GM12878 (cell line): ENCODE measurements at regions of chr9 and their contacts with region 1.

Region 1: GRCh38 chr9:133030317-133031129 is at the start of gene GTF3C5:
- DNase-seq: peak; percentile 97
- ATAC-seq: peak; percentile 99
- H3K4me3 ChIP-seq: peak within 1 kb of the TSS; percentile 77
- H3K27ac ChIP-seq: peak within 1 kb of the TSS; percentile 91
- H3K4me1 ChIP-seq: peaks cover 13% of the 10 kb centered on the region
- H3K27me3 ChIP-seq: no peaks in the 10 kb centered on the region
- CTCF ChIP-seq: no peak
- EP300 ChIP-seq: peak in 1 of 2 experiments; percentile 35; a peak in 1 of 4 replicates
- POLR2A ChIP-seq: peak; percentile 95
- RAD21 ChIP-seq: no peak
- polyA plus RNA-seq, gene GTF3C5: 2.2 to 6.9 TPM

Region 2: DNA sequence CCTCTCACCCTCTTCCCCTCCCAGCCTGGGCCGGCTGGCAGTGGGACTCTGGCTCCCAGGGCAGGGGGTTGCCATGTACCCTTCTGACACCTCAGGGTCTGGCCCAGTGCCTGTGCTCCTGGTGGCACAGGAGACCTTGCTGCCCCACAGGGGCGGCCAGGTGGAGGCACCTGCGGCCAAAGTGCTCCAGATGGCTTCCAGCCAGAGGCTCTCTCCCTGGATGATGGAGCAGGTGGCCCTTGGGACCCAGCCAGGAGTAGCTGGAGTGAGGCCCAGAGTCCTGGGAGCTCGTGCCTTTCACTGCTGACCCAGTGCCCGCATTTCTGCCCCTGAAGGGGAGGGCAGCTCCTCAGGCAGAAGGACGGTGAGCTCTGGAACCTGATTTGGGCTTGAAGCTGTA is 781.4 kb before region 1 on chr9:
- CTCF ChIA-PET with region 1: no interaction called
- POLR2A ChIA-PET with region 1: no interaction called
- RAD21 ChIA-PET with region 1: no interaction called
- SMC1A ChIA-PET with region 1: no interaction called
- in situ Hi-C with region 1: no loop called
- intact Hi-C with region 1: no loop called
- DNase-seq: no peak
- ATAC-seq: no peak
- H3K4me3 ChIP-seq: no peak overlapping the region
- H3K27ac ChIP-seq: no peak overlapping the region
- H3K4me1 ChIP-seq: no peaks in the 10 kb centered on the region
- H3K27me3 ChIP-seq: no peaks in the 10 kb centered on the region; a peak in 1 of 4 replicates
- CTCF ChIP-seq: no peak
- EP300 ChIP-seq: no peak
- POLR2A ChIP-seq: no peak
- RAD21 ChIP-seq: no peak

Region 3: GRCh38 chr9:133014696-133015095 is 15.8 kb before region 1 on chr9:
- CTCF ChIA-PET with region 1: no interaction called
- POLR2A ChIA-PET with region 1: no interaction called
- RAD21 ChIA-PET with region 1: no interaction called
- SMC1A ChIA-PET with region 1: no interaction called
- in situ Hi-C with region 1: no loop called
- intact Hi-C with region 1: no loop called
- DNase-seq: no peak
- ATAC-seq: no peak
- H3K4me3 ChIP-seq: no peak overlapping the region
- H3K27ac ChIP-seq: no peak overlapping the region
- H3K4me1 ChIP-seq: no peaks in the 10 kb centered on the region
- H3K27me3 ChIP-seq: no peaks in the 10 kb centered on the region; a peak in 1 of 4 replicates
- CTCF ChIP-seq: no peak
- EP300 ChIP-seq: no peak
- POLR2A ChIP-seq: no peak
- RAD21 ChIP-seq: no peak

Region 4: GRCh38 chr9:133042676-133043075 is 12.2 kb after region 1 on chr9:
- CTCF ChIA-PET with region 1: interaction called, 20 read pairs
- POLR2A ChIA-PET with region 1: no interaction called
- RAD21 ChIA-PET with region 1: interaction called, 4 read pairs
- SMC1A ChIA-PET with region 1: interaction called, 4 read pairs
- in situ Hi-C with region 1: no loop called
- intact Hi-C with region 1: no loop called
- DNase-seq: no peak
- ATAC-seq: no peak
- H3K4me3 ChIP-seq: no peak overlapping the region
- H3K27ac ChIP-seq: no peak overlapping the region
- H3K4me1 ChIP-seq: no peaks in the 10 kb centered on the region
- H3K27me3 ChIP-seq: no peaks in the 10 kb centered on the region
- CTCF ChIP-seq: no peak
- EP300 ChIP-seq: no peak
- POLR2A ChIP-seq: no peak
- RAD21 ChIP-seq: no peak

Region 5: DNA sequence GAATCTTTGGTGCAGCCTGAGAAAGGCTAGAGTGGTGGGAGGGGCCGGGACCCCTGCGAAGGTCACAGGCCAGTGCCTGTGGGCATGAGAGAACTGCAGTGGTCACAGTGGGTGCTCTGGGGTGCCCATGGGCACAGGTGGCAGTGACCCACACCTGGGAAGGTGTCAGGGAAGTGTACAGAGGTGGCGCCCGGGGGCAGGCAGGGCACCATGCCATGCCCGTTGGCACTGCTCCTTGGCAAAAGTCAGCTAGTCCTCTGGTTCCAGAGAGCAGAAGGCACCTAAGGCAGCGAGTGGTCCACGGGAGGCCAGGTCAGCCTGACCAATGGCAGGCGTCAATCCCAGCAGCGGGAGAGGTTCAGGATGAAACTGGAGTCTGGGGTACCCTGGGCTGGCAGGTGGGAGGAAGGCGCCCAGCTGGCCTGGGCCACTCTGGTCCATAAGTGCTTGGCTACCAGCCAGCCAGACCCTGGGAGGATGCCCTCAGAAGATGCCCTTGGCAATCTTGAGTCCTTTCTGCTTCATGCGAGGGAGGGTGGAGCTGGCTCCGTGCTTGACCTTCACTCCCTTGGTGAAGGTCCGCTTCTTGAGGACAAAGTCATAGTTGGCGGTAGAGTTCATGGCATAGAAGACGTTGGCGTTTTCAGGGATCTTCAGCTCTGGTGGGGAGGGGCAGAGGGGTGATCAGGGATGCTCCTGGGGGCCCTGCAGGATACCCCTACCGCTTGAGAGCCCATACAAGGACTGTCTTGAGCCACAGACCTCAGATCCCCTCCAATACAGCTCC is 67.8 kb after region 1 on chr9:
- CTCF ChIA-PET with region 1: no interaction called
- POLR2A ChIA-PET with region 1: no interaction called
- RAD21 ChIA-PET with region 1: no interaction called
- SMC1A ChIA-PET with region 1: no interaction called
- in situ Hi-C with region 1: no loop called
- intact Hi-C with region 1: no loop called
- DNase-seq: no peak
- ATAC-seq: no peak
- H3K4me3 ChIP-seq: no peak overlapping the region
- H3K27ac ChIP-seq: no peak overlapping the region
- H3K4me1 ChIP-seq: no peaks in the 10 kb centered on the region
- H3K27me3 ChIP-seq: no peaks in the 10 kb centered on the region
- CTCF ChIP-seq: no peak
- EP300 ChIP-seq: no peak
- POLR2A ChIP-seq: no peak; the same call in 1 of the 2 replicates
- RAD21 ChIP-seq: no peak